Transverse colon (tissue), 4 donors: ENCODE measurements at regions of chr18 and their contacts with region 1.

Region 1: GRCh38 chr18:28357766-28358401 is 181.0 kb upstream of the CDH2 start:
- DNase-seq: no peak
- H3K4me3 ChIP-seq: no peak overlapping the region
- H3K27ac ChIP-seq: no peak overlapping the region
- H3K4me1 ChIP-seq: no peaks in the 10 kb centered on the region
- H3K27me3 ChIP-seq: no peaks in the 10 kb centered on the region
- CTCF ChIP-seq: peak in 1 of 5 experiments; percentile 3
- EP300 ChIP-seq: no peak
- POLR2A ChIP-seq: no peak

Region 2: GRCh38 chr18:28163201-28163778 is 194.6 kb before region 1 on chr18:
- in situ Hi-C with region 1: no loop called
- intact Hi-C with region 1: no loop called
- DNase-seq: no peak
- H3K4me3 ChIP-seq: no peak overlapping the region
- H3K27ac ChIP-seq: no peak overlapping the region
- H3K4me1 ChIP-seq: no peaks in the 10 kb centered on the region
- H3K27me3 ChIP-seq: no peaks in the 10 kb centered on the region
- CTCF ChIP-seq: no peak
- EP300 ChIP-seq: no peak
- POLR2A ChIP-seq: no peak

Region 3: GRCh38 chr18:28331551-28331950 is 26.3 kb before region 1 on chr18:
- in situ Hi-C with region 1: no loop called
- intact Hi-C with region 1: no loop called
- DNase-seq: no peak
- H3K4me3 ChIP-seq: no peak overlapping the region
- H3K27ac ChIP-seq: no peak overlapping the region
- H3K4me1 ChIP-seq: no peaks in the 10 kb centered on the region
- H3K27me3 ChIP-seq: no peaks in the 10 kb centered on the region
- CTCF ChIP-seq: no peak
- EP300 ChIP-seq: no peak
- POLR2A ChIP-seq: no peak

Region 4: GRCh38 chr18:28422577-28422976 is 64.7 kb after region 1 on chr18:
- in situ Hi-C with region 1: no loop called
- intact Hi-C with region 1: no loop called
- DNase-seq: no peak
- H3K4me3 ChIP-seq: no peak overlapping the region
- H3K27ac ChIP-seq: no peak overlapping the region
- H3K4me1 ChIP-seq: no peaks in the 10 kb centered on the region
- H3K27me3 ChIP-seq: no peaks in the 10 kb centered on the region
- CTCF ChIP-seq: no peak
- EP300 ChIP-seq: no peak
- POLR2A ChIP-seq: no peak

Region 5: GRCh38 chr18:28469946-28470345 is 112.1 kb after region 1 on chr18:
- in situ Hi-C with region 1: loop called in 1 of 4 experiments (anchors 25 kb)
- intact Hi-C with region 1: no loop called
- DNase-seq: no peak
- H3K4me3 ChIP-seq: no peak overlapping the region
- H3K27ac ChIP-seq: no peak overlapping the region
- H3K4me1 ChIP-seq: no peaks in the 10 kb centered on the region
- H3K27me3 ChIP-seq: no peaks in the 10 kb centered on the region
- CTCF ChIP-seq: no peak
- EP300 ChIP-seq: no peak
- POLR2A ChIP-seq: no peak